AG04449 (cell line): ENCODE measurements at regions of chr5 and their contacts with region 1.

Region 1: DNA sequence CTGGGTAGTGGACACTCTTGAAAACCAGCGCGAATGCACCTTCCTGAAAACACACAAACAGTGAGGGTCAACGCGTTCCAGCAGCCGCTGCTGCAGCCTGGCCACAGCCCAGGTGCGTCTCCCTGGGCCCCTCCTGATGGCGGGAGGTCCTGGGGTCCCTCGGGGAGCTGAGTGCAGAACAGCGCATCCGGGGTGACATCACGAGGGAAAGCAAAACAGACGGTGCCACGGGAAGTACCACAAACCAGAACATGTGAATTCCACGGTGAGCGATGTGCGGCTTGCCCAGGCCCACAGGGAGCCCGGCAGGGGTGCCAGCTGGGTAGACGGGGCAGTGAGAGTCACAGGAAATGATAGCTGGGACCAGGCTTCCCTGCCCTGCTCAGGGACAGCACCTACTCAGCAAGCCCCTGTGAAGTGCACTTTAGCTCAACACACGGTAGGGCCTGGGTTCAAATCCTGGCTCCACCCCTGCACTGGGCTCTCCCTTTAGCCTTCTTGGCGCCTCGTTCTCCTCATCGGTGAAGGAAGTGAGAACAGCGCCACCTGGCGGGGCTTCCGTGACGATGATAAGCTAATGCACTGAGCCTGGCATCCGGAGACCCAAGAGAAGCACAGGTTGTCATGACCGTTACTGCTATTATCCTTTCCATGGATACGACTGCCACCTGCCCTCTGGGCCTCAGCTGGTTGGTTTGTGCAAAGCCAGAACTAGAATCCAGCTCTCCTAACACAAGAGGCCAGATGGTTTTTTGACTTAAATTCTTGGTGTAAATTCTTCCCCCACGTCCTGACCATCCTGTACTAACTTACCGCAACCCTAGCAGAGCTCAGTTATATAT is 24.6 kb downstream of the GFPT2 start:
- DNase-seq: no peak
- H3K4me3 ChIP-seq: no peak overlapping the region
- CTCF ChIP-seq: peak; percentile 69

Region 2: GRCh38 chr5:180222056-180222455 is 106.5 kb before region 1 on chr5:
- CTCF ChIA-PET with region 1: no interaction called
- POLR2A ChIA-PET with region 1: no interaction called
- DNase-seq: no peak
- H3K4me3 ChIP-seq: no peak overlapping the region
- CTCF ChIP-seq: no peak

Region 3: DNA sequence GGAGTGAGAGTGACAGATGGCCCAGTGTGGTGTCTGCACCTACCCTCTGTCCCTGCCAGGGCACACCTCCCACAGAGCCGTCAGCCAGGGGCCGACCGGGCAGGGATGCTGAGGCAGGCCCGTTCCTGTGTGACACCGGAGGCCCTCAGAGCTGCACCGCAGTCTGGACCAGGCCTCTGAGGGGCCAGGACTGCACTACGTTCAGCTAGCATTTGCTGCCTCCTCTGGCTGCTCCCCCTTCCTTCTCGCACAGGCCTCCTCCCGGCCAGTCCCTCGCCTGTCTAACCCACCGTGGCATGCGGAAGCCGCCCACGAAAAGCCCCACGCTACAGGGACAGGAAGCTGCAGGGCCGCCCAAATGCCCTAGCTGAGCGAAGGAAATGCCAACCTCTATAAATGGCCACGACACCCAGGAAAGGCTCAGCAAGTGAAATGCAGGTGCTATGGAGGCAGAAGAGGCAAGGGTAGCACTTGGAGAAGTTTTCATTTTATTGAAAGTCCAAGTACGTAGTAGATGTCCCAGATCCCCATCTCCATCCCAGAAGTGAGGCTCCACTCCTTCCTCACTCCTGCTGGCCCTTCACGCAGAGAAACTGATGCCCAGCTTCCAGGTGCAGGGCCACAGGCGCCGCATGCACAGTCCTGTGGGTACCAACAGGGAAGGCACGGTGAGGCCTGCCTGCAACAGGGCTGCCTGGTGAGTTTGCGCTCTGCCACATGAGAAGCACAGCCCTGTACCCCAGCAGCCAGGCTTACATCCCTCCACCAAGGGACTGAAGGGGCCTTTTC is 75.3 kb before region 1 on chr5:
- CTCF ChIA-PET with region 1: no interaction called
- POLR2A ChIA-PET with region 1: no interaction called
- DNase-seq: no peak
- H3K4me3 ChIP-seq: no peak overlapping the region
- CTCF ChIP-seq: no peak

Region 4: DNA sequence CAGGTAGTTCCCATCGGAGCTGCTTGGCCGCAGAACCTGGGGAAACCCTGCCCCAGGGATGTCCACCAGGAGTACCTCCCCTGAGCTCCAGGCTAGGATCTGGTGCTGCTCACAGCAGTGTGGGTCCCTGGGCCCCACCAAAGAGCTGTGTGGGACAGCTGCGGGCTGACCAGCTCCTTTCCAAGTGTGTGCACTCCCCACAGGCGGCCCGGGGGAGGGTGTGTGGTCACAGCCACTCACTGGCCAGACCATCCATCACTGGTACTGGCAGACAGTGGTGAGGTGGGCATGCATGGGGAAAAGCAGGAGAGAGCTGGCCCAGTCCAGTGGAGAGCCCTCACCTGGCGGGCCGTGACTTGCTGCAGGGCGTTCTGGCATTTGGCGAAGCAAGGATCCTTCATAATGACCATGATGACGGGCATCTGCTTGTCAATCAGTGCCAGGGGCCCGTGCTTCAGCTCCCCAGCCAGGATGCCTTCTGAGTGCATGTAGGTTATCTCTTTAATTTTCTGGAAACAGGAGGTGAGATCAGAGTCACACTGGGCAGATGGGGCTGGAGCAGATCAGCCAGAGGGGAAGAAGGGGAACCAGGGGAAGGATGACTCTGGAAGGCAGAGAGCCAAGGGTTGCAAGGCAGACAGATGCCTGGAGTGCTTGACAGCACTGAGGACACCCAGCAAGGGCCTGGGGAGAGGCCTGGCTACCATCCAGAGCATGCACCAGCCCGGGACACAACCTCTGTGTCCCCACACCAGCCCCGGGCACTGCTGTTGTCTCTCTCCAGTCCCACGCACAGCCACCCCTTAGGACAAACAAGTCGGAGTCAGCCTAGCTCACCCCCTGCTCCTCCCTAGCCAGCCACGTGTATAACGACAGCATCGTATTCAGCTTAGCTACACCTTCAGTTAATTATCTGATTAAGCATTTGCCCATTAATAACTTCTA is 23.8 kb before region 1 on chr5:
- CTCF ChIA-PET with region 1: interaction called, 52 read pairs
- POLR2A ChIA-PET with region 1: no interaction called
- DNase-seq: no peak
- H3K4me3 ChIP-seq: no peak overlapping the region
- CTCF ChIP-seq: no peak

Region 5: GRCh38 chr5:180315762-180316212 is 12.7 kb before region 1 on chr5:
- CTCF ChIA-PET with region 1: interaction called, 182 read pairs
- POLR2A ChIA-PET with region 1: no interaction called
- DNase-seq: no peak
- H3K4me3 ChIP-seq: no peak overlapping the region
- CTCF ChIP-seq: peak; percentile 97

Region 6: DNA sequence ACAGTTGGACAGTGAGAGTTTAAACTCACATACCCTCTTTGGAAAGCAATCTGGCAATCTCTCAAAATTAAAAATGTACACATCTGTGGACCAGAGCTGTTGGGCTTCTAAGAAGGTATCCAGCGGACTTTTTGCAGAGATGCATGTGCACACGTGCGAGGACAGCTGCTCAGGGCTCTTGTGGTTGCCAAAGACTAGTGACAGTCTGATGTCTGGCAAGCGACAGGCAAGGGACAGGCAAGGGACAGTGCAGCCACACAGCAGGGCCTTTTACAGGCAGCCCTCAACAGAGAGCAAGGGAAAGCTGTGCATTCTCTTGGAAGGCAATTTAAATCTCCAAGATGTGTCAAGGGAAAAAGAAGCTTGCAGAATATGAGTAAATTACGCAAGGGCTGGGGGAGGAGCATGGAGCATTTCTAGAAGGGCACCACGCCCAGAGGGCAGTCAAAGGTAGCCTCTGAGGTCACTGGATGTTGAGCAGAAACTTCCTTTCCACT is 15.4 kb after region 1 on chr5:
- CTCF ChIA-PET with region 1: interaction called, 66 read pairs
- POLR2A ChIA-PET with region 1: interaction called, 9 read pairs
- DNase-seq: no peak
- H3K4me3 ChIP-seq: no peak overlapping the region
- CTCF ChIP-seq: no peak

Region 7: GRCh38 chr5:180353048-180353979 is 24.8 kb after region 1 on chr5 and contains the start of gene GFPT2:
- CTCF ChIA-PET with region 1: interaction called, 17 read pairs
- POLR2A ChIA-PET with region 1: interaction called, 5 read pairs
- DNase-seq: no peak
- H3K4me3 ChIP-seq: peak within 1 kb of the TSS; percentile 72
- CTCF ChIP-seq: no peak

Region 8: GRCh38 chr5:180460834-180461233 is 132.3 kb after region 1 on chr5:
- CTCF ChIA-PET with region 1: no interaction called
- POLR2A ChIA-PET with region 1: no interaction called
- DNase-seq: no peak
- H3K4me3 ChIP-seq: no peak overlapping the region
- CTCF ChIP-seq: no peak

Region 9: GRCh38 chr5:180470966-180471582 is 142.6 kb after region 1 on chr5:
- CTCF ChIA-PET with region 1: interaction called, 14 read pairs
- POLR2A ChIA-PET with region 1: no interaction called
- DNase-seq: no peak
- H3K4me3 ChIP-seq: no peak overlapping the region
- CTCF ChIP-seq: peak; percentile 92